Activated naive CD4-positive, alpha-beta T cell treated with anti-CD3 and anti-CD28 coated beads, Interleukin-2, amount 10 ng/mL, durations not matched to agents 7 days and 5 days (primary cell): ENCODE measurements at regions of chr11 and their contacts with region 1.

Region 1: DNA sequence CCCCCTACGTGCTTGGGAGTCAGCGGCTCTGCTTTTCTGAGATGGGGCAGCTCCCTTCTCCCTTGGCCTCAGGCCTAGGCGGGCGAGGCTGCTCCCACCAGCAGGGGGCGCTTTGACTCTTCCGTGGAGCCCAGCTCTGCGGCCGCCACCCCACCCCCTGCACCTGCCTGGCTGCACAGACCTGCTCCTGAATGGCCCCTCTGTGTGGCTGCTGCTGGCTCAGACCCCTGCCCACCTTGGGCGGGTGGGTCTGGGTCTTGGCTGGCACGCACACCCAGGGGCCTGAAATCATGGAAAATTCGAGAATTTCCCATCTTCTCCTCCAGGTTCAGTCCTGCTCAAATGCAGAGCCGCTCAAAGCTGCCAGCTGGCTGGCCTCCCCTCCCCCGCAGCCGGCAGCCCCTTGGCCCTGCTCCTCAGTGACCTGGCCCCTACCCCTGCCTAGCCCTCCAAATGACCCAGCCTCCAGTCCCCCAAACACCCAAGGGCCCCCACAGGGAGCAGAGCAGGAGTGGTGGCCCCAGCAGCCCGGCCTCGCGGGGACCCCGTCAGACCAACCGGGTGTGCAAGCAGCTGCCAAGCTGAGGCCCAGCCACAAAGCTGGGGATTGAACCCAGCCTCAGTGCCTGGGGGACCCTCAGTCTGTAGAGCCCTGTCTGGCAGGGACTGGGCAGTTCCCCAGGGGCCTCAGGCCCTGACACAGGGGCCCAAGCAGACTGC is 9.0 kb downstream of the PRR33 start:
- DNase-seq: peak; percentile 83
- H3K4me3 Mint-ChIP-seq: no peak overlapping the region
- H3K27ac Mint-ChIP-seq: no peak overlapping the region
- H3K4me1 Mint-ChIP-seq: peaks cover 10% of the 10 kb centered on the region
- H3K27me3 Mint-ChIP-seq: no peaks in the 10 kb centered on the region

Region 2: GRCh38 chr11:1744137-1744886 is 138.4 kb before region 1 on chr11:
- CTCF ChIA-PET with region 1: no interaction called
- DNase-seq: no peak
- H3K4me3 Mint-ChIP-seq: no peak overlapping the region
- H3K27ac Mint-ChIP-seq: no peak overlapping the region
- H3K4me1 Mint-ChIP-seq: no peaks in the 10 kb centered on the region
- H3K27me3 Mint-ChIP-seq: peaks cover 38% of the 10 kb centered on the region

Region 3: GRCh38 chr11:1852877-1853276 is 29.8 kb before region 1 on chr11 and contains the start of gene LSP1:
- CTCF ChIA-PET with region 1: interaction called, 22 read pairs
- DNase-seq: peak; percentile 93
- H3K4me3 Mint-ChIP-seq: peak within 1 kb of the TSS; percentile 100
- H3K27ac Mint-ChIP-seq: peak within 1 kb of the TSS; percentile 99
- H3K4me1 Mint-ChIP-seq: peaks cover 65% of the 10 kb centered on the region
- H3K27me3 Mint-ChIP-seq: peaks cover 16% of the 10 kb centered on the region